Activated CD4-positive, alpha-beta T cell treated with anti-CD3 and anti-CD28 coated beads for 36 hours (primary cell): ENCODE measurements at regions of chr2 and their contacts with region 1.

Region 1: GRCh38 chr2:136135921-136136906 is 18.3 kb upstream of the CXCR4 start:
- DNase-seq: peak; percentile 73
- ATAC-seq: peak; percentile 57
- H3K4me3 Mint-ChIP-seq: peak overlapping the region; percentile 20
- H3K27ac Mint-ChIP-seq: peak overlapping the region; percentile 78
- H3K4me1 Mint-ChIP-seq: peaks cover 91% of the 10 kb centered on the region
- H3K27me3 Mint-ChIP-seq: peaks cover 19% of the 10 kb centered on the region

Region 2: GRCh38 chr2:135531231-135532228 is 604.7 kb before region 1 on chr2 and contains the start of gene R3HDM1:
- CTCF ChIA-PET with region 1: no interaction called
- POLR2A ChIA-PET with region 1: no interaction called
- intact Hi-C with region 1: loop called in 1 of 2 experiments (anchors 5 kb)
- DNase-seq: peak; percentile 96
- ATAC-seq: peak; percentile 88
- H3K4me3 Mint-ChIP-seq: no peak within 1 kb of the TSS
- H3K27ac Mint-ChIP-seq: peak within 1 kb of the TSS; percentile 84
- H3K4me1 Mint-ChIP-seq: peaks cover 32% of the 10 kb centered on the region
- H3K27me3 Mint-ChIP-seq: no peaks in the 10 kb centered on the region
- total RNA-seq, gene R3HDM1: 62.6 to 100.0 TPM

Region 3: DNA sequence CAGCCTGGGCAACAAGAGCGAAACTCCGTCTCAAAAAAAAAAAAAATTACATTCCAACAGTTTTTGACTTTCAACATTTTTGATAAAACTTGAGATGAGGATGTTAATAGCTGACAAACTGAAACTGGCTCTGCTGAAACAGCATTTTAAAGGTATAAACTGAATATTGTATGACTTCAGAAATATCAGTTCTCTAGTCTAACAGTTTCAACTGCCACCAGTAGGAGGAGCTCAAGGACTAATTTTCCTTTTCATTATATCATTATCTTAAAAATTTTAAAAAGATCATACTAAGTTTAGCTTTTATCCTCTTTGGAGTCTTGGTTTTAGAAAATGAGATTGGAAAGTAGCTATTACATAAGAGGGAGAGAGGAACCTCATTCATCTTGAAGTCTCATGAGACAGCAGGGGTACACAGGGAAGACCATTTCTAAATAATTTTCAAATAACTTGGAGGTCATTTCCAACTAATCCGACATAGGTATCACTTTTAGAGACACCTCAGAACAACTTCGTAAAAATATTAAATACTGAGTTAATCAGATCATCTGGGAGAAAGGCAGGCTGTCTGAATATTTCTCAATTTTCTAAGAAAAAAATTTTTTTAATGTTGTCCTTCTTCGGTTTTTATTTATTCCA is 222.4 kb before region 1 on chr2:
- CTCF ChIA-PET with region 1: interaction called, 8 read pairs
- POLR2A ChIA-PET with region 1: interaction called, 3 read pairs
- intact Hi-C with region 1: loop called in 1 of 2 experiments (anchors 5 kb)
- DNase-seq: peak; percentile 53
- ATAC-seq: peak; percentile 58
- H3K4me3 Mint-ChIP-seq: no peak overlapping the region
- H3K27ac Mint-ChIP-seq: no peak overlapping the region
- H3K4me1 Mint-ChIP-seq: peaks cover 7% of the 10 kb centered on the region
- H3K27me3 Mint-ChIP-seq: no peaks in the 10 kb centered on the region

Region 4: DNA sequence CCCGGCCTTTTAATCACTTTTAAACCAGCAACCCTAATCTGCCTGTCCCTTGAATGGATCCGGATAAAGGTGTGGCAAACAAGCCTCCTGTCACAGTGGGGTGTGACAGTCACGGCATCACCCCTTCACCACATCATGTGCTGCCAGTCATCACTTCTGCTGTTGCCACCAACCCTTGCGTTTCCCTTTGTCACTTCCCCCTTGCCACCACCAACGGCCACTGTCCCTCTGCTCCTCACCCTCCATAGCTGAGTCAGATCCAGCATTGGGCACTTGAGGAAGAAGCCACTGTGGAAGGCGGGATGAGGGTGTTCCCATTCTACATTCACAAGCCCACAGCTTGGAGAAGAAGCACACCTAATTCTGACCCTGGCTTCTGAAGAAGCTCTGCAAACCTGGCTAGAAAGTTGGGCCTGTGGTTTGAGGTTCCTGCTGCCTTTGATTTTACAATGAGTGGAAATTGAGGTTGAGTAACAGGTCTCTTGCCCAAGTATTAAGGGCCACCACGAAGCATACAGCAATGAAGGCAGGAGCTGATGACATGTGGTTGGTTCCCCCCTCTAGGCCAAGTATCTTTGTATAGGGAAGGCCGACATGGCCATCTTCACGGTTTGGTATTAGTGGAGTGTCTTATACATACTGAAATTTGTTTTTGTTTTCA is 127.9 kb before region 1 on chr2:
- CTCF ChIA-PET with region 1: no interaction called
- POLR2A ChIA-PET with region 1: interaction called, 6 read pairs
- intact Hi-C with region 1: loop called in 1 of 2 experiments (anchors 5 kb)
- DNase-seq: peak; percentile 74
- ATAC-seq: peak; percentile 91
- H3K4me3 Mint-ChIP-seq: no peak overlapping the region
- H3K27ac Mint-ChIP-seq: peak overlapping the region; percentile 47
- H3K4me1 Mint-ChIP-seq: peaks cover 31% of the 10 kb centered on the region
- H3K27me3 Mint-ChIP-seq: no peaks in the 10 kb centered on the region

Region 5: GRCh38 chr2:136207030-136207623 is 70.9 kb after region 1 on chr2:
- CTCF ChIA-PET with region 1: interaction called, 6 read pairs
- POLR2A ChIA-PET with region 1: interaction called, 7 read pairs
- intact Hi-C with region 1: loop called (anchors 2 kb)
- DNase-seq: peak; percentile 50
- ATAC-seq: peak; percentile 75
- H3K4me3 Mint-ChIP-seq: peak overlapping the region; percentile 26
- H3K27ac Mint-ChIP-seq: peak overlapping the region; percentile 88
- H3K4me1 Mint-ChIP-seq: peaks cover 40% of the 10 kb centered on the region
- H3K27me3 Mint-ChIP-seq: peaks cover 2% of the 10 kb centered on the region

Region 6: GRCh38 chr2:136310797-136311603 is 174.8 kb after region 1 on chr2:
- CTCF ChIA-PET with region 1: interaction called, 12 read pairs
- POLR2A ChIA-PET with region 1: interaction called, 4 read pairs
- intact Hi-C with region 1: loop called (anchors 1 kb)
- DNase-seq: peak; percentile 50
- ATAC-seq: peak; percentile 78
- H3K4me3 Mint-ChIP-seq: no peak overlapping the region
- H3K27ac Mint-ChIP-seq: peak overlapping the region; percentile 86
- H3K4me1 Mint-ChIP-seq: peaks cover 36% of the 10 kb centered on the region
- H3K27me3 Mint-ChIP-seq: peaks cover 4% of the 10 kb centered on the region

Region 7: DNA sequence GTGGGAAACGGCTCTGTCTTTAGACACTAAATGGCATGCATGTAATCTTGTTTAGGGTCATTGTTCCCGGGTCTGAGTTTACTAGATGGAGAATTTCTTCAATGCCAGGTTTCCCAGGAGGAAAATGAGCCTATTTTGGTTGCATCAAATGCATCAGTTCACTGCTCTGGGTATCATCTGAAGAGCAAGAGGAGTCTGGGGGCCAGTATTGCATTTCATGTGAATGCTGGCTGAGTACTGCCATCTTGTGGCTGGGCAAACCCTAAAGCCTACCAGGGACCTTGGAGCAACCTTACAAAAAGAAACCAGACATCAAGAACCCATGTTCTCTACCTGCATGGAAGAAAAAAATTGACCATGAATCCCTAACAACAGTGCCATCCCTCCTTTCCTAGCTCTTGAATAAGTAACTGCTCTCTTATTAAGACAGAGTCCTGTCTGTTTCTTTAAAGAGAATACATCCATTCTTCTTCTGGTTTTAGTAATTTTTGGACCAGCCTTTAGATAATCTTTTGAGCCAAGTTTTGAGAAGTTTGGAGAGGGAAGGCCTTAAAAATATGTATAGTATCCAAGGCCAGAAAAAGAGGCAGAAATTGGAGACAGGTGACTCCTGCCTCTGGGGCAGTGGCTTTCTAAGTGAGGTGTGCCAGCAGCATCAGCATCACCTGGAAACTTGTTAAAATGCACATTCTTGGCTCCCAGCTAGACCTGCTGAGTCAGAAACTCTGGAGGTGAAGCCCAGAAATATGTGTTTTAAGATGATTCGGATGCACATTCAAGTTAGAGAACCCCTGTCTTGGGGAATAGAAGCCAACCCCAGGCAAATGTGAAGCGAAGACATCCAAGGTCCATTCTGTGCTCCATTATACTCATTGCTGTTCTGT is 242.7 kb after region 1 on chr2:
- CTCF ChIA-PET with region 1: interaction called, 35 read pairs
- POLR2A ChIA-PET with region 1: interaction called, 15 read pairs
- intact Hi-C with region 1: loop called (anchors 1 kb)
- DNase-seq: peak; percentile 87
- ATAC-seq: peak; percentile 11
- H3K4me3 Mint-ChIP-seq: no peak overlapping the region
- H3K27ac Mint-ChIP-seq: no peak overlapping the region
- H3K4me1 Mint-ChIP-seq: peaks cover 82% of the 10 kb centered on the region
- H3K27me3 Mint-ChIP-seq: no peaks in the 10 kb centered on the region